Heart right ventricle (tissue), 16 donors: ENCODE measurements at regions of chr5 and their contacts with region 1.

Region 1: GRCh38 chr5:51479840-51480239 is 96.6 kb downstream of the ISL1 start:
- DNase-seq: no peak
- ATAC-seq: no peak
- H3K4me3 ChIP-seq: no peak overlapping the region
- H3K27ac ChIP-seq: no peak overlapping the region
- H3K4me1 ChIP-seq: no peaks in the 10 kb centered on the region
- H3K27me3 ChIP-seq: no peaks in the 10 kb centered on the region
- CTCF ChIP-seq: no peak

Region 2: GRCh38 chr5:51712201-51712600 is 232.4 kb after region 1 on chr5:
- intact Hi-C with region 1: loop called in 1 of 10 experiments (anchors 5 kb)
- DNase-seq: no peak
- ATAC-seq: no peak
- H3K4me3 ChIP-seq: no peak overlapping the region
- H3K27ac ChIP-seq: no peak overlapping the region
- H3K4me1 ChIP-seq: no peaks in the 10 kb centered on the region
- H3K27me3 ChIP-seq: no peaks in the 10 kb centered on the region
- CTCF ChIP-seq: no peak

Region 3: GRCh38 chr5:51881901-51882300 is 402.1 kb after region 1 on chr5:
- intact Hi-C with region 1: no loop called
- DNase-seq: no peak
- ATAC-seq: no peak
- H3K4me3 ChIP-seq: no peak overlapping the region
- H3K27ac ChIP-seq: no peak overlapping the region
- H3K4me1 ChIP-seq: no peaks in the 10 kb centered on the region
- H3K27me3 ChIP-seq: peaks cover 0 to 3% (median 0%) of the 10 kb centered on the region in 7 donors
- CTCF ChIP-seq: no peak